Endothelial cell of umbilical vein (primary cell): ENCODE measurements at regions of chr12 and their contacts with region 1.

Region 1: DNA sequence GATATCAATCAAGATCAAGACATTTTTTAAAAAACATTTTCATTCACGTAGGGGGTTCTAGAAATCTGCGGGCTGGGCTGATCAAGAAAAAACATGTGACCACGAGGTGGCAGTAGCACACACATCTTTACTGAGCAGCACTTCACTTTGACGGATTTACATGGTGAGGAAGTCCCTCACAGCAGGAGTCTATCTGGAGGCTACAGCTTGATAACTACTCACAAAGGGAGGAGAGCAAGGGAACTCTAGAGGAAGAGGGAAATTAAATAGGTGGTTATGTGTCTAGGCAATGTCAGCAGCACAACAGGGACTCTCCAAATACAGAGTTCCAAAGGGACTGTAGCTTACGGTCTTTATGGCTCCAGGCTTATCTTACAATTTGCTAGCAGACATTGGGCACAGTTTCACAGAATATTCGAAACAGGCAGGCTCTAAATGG is 248.1 kb downstream of the DPY19L2 start:
- DNase-seq: peak; percentile 80
- H3K4me3 ChIP-seq: no peak overlapping the region
- H3K27ac ChIP-seq: no peak overlapping the region
- H3K4me1 ChIP-seq: no peaks in the 10 kb centered on the region
- H3K27me3 ChIP-seq: peaks cover 0 to 12% of the 10 kb centered on the region in 2 experiments
- CTCF ChIP-seq: peak; percentile 58 to 68
- POLR2A ChIP-seq: no peak

Region 2: GRCh38 chr12:63151623-63152320 is 268.5 kb before region 1 on chr12:
- CTCF ChIA-PET with region 1: interaction called, 15 read pairs
- POLR2A ChIA-PET with region 1: no interaction called
- dilution Hi-C with region 1: no loop called
- intact Hi-C with region 1: loop called (anchors 5 kb)
- DNase-seq: peak; percentile 51
- H3K4me3 ChIP-seq: no peak overlapping the region
- H3K27ac ChIP-seq: no peak overlapping the region
- H3K4me1 ChIP-seq: no peaks in the 10 kb centered on the region
- H3K27me3 ChIP-seq: peaks cover 32 to 63% of the 10 kb centered on the region in 2 experiments
- CTCF ChIP-seq: peak; percentile 70 to 74
- POLR2A ChIP-seq: no peak

Region 3: DNA sequence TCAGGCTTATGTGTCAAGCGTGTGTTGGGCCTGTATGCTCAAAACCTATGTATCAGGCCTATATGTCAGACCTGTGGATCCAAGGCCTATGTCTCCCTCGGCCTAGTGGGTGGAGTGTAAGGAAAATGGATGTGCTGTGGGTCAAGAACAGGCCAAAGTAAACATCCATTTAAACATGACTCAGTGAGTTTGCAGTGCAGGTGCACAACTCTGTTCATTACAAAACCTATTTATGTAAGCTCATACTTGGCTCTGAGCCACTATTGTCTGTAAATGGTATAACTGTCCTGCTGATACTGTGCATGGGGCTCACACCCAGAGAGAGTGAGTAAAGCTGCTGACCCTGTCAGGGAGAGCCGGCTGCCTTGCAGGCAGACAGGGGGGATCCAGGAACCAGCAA is 19.5 kb before region 1 on chr12:
- CTCF ChIA-PET with region 1: interaction called, 5 read pairs
- POLR2A ChIA-PET with region 1: no interaction called
- dilution Hi-C with region 1: no loop called
- intact Hi-C with region 1: loop called (anchors 1 kb)
- DNase-seq: peak; percentile 95
- H3K4me3 ChIP-seq: no peak overlapping the region
- H3K27ac ChIP-seq: peak overlapping the region; percentile 78
- H3K4me1 ChIP-seq: peaks cover 15% of the 10 kb centered on the region
- H3K27me3 ChIP-seq: no peaks in the 10 kb centered on the region
- CTCF ChIP-seq: no peak
- POLR2A ChIP-seq: peak; percentile 61

Region 4: DNA sequence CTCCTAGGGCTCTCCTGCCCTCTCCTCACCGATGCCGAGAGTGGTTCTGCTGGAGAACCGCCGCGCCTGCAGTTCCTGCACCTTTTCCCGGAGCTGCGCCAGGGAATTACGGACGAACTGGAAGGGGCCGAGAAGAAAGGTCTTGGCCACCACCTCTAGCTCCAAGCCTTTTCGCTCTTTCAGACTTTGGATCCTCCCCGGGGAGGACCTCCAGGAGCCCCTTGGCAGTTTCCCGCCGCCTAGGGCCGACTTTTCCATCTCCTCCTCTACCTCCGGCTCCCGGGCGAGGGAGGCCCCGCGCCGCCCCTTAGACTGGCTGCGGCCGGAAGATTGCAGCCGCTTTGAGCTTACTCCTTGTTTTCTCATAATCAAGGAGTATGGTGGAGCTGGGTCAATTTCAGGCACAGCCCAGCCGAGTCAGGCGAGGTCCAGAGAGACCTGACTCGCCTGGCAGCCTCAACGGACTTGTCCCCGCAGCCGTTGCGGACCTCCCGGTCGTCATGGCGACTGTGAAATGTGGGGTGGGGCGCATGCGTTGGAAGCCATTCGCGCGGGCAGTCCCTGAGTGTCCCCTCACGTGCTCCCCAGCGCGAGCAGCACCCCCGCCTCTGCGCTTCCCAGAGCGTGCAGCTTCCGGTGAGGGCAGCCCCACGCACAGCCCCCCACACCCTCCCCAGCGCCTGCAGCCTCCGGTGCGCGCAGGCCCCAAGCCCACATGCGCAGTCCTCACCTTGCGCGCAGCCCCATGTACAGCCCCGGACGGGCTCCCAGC is 248.0 kb after region 1 on chr12 and contains the start of gene DPY19L2:
- CTCF ChIA-PET with region 1: no interaction called
- POLR2A ChIA-PET with region 1: no interaction called
- dilution Hi-C with region 1: no loop called
- intact Hi-C with region 1: loop called (anchors 5 kb)
- DNase-seq: peak; percentile 47
- H3K4me3 ChIP-seq: peak within 1 kb of the TSS; percentile 39 to 49 (median 48)
- H3K27ac ChIP-seq: no peak within 1 kb of the TSS
- H3K4me1 ChIP-seq: no peaks in the 10 kb centered on the region
- H3K27me3 ChIP-seq: peaks cover 4 to 8% of the 10 kb centered on the region in 2 experiments
- CTCF ChIP-seq: no peak
- POLR2A ChIP-seq: no peak
- total RNA-seq, gene DPY19L2: 1.6 and 2.3 TPM in 2 replicates

Region 5: GRCh38 chr12:63779498-63780481 is 359.6 kb after region 1 on chr12 and contains the start of gene RXYLT1:
- CTCF ChIA-PET with region 1: no interaction called
- POLR2A ChIA-PET with region 1: no interaction called
- dilution Hi-C with region 1: no loop called
- intact Hi-C with region 1: loop called (anchors 5 kb)
- DNase-seq: peak; percentile 82
- H3K4me3 ChIP-seq: peak within 1 kb of the TSS; percentile 60 to 81 (median 74)
- H3K27ac ChIP-seq: peak within 1 kb of the TSS; percentile 77
- H3K4me1 ChIP-seq: peaks cover 12% of the 10 kb centered on the region
- H3K27me3 ChIP-seq: peaks cover 8 to 29% of the 10 kb centered on the region in 2 experiments
- CTCF ChIP-seq: no peak
- POLR2A ChIP-seq: peak; percentile 75
- total RNA-seq, gene RXYLT1: 13.1 and 15.8 TPM in 2 replicates

Region 6: GRCh38 chr12:64256166-64256800 is 836.1 kb after region 1 on chr12:
- CTCF ChIA-PET with region 1: no interaction called
- POLR2A ChIA-PET with region 1: no interaction called
- dilution Hi-C with region 1: no loop called
- intact Hi-C with region 1: loop called (anchors 5 kb)
- DNase-seq: peak; percentile 61
- H3K4me3 ChIP-seq: no peak overlapping the region
- H3K27ac ChIP-seq: no peak overlapping the region
- H3K4me1 ChIP-seq: no peaks in the 10 kb centered on the region
- H3K27me3 ChIP-seq: no peaks in the 10 kb centered on the region
- CTCF ChIP-seq: peak; percentile 25 to 27
- POLR2A ChIP-seq: no peak

Region 7: GRCh38 chr12:64625243-64626077 is 1205.2 kb after region 1 on chr12:
- CTCF ChIA-PET with region 1: no interaction called
- POLR2A ChIA-PET with region 1: no interaction called
- dilution Hi-C with region 1: no loop called
- intact Hi-C with region 1: no loop called
- DNase-seq: peak; percentile 96
- H3K4me3 ChIP-seq: peak overlapping the region in 2 of 3 experiments; percentile 11 to 39
- H3K27ac ChIP-seq: peak overlapping the region; percentile 89
- H3K4me1 ChIP-seq: peaks cover 65% of the 10 kb centered on the region
- H3K27me3 ChIP-seq: no peaks in the 10 kb centered on the region
- CTCF ChIP-seq: no peak
- POLR2A ChIP-seq: peak; percentile 36